ENCODE measurements at regions of chr6 and their contacts with region 1.

Region 1: GRCh38 chr6:10478187-10479040 is 42.7 kb upstream of the GCNT2 start:
- DNase-seq: no peak
- ATAC-seq: peak; percentile 44
- H3K4me3 Mint-ChIP-seq: no peak overlapping the region
- H3K27ac Mint-ChIP-seq: peak overlapping the region; percentile 7
- H3K4me1 Mint-ChIP-seq: no peaks in the 10 kb centered on the region
- H3K27me3 Mint-ChIP-seq: peaks cover 5% of the 10 kb centered on the region

Region 2: GRCh38 chr6:10409233-10409714 is 69.1 kb before region 1 on chr6:
- CTCF ChIA-PET with region 1: no interaction called
- POLR2A ChIA-PET with region 1: no interaction called
- intact Hi-C with region 1: no loop called
- DNase-seq: no peak
- ATAC-seq: no peak
- H3K4me3 Mint-ChIP-seq: no peak overlapping the region
- H3K27ac Mint-ChIP-seq: peak overlapping the region; percentile 19
- H3K4me1 Mint-ChIP-seq: peaks cover 30% of the 10 kb centered on the region
- H3K27me3 Mint-ChIP-seq: peaks cover 74% of the 10 kb centered on the region

Region 3: GRCh38 chr6:10759312-10759839 is 281.0 kb after region 1 on chr6:
- CTCF ChIA-PET with region 1: interaction called, 10 read pairs
- POLR2A ChIA-PET with region 1: no interaction called
- intact Hi-C with region 1: no loop called
- DNase-seq: no peak
- ATAC-seq: peak; percentile 64
- H3K4me3 Mint-ChIP-seq: no peak overlapping the region
- H3K27ac Mint-ChIP-seq: no peak overlapping the region
- H3K4me1 Mint-ChIP-seq: peaks cover 33% of the 10 kb centered on the region
- H3K27me3 Mint-ChIP-seq: no peaks in the 10 kb centered on the region